Common myeloid progenitor, CD34-positive (primary cell): ENCODE measurements at regions of chr10 and their contacts with region 1.

Region 1: DNA sequence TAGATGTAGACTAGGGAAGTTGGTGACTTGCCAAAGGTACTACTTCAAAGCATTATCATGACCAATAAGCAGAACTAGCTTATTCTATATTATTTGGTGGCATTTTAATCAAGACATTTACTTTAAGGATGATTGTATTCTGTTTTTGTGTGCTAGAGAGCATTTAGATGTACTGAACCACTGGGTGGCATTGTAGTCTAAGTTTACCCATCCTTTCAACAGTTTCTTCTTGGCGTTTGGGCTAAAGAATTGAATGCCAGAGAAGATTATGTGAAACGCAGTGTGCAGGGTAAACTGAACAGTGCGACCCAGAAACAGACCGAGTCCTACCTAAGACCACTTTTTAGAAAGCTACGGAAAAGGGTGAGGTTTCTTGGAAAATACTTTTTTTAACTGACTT is 26.8 kb downstream of the PRPF18 start:
- DNase-seq: peak; percentile 36 to 60 (median 59)
- H3K4me3 ChIP-seq: no peak overlapping the region
- H3K27ac ChIP-seq: no peak overlapping the region
- H3K4me1 ChIP-seq: peaks cover 0 to 6% (median 1%) of the 10 kb centered on the region in 4 experiments
- H3K27me3 ChIP-seq: no peaks in the 10 kb centered on the region

Region 2: GRCh38 chr10:13593535-13593934 is 20.0 kb before region 1 on chr10:
- CTCF ChIA-PET with region 1: no interaction called
- POLR2A ChIA-PET with region 1: no interaction called
- DNase-seq: no peak
- H3K4me3 ChIP-seq: no peak overlapping the region
- H3K27ac ChIP-seq: no peak overlapping the region
- H3K4me1 ChIP-seq: no peaks in the 10 kb centered on the region
- H3K27me3 ChIP-seq: no peaks in the 10 kb centered on the region

Region 3: GRCh38 chr10:13724484-13724883 is 111.0 kb after region 1 on chr10:
- CTCF ChIA-PET with region 1: no interaction called
- POLR2A ChIA-PET with region 1: no interaction called
- DNase-seq: no peak
- H3K4me3 ChIP-seq: no peak overlapping the region
- H3K27ac ChIP-seq: no peak overlapping the region
- H3K4me1 ChIP-seq: peaks cover 0 to 4% (median 2%) of the 10 kb centered on the region in 4 experiments
- H3K27me3 ChIP-seq: no peaks in the 10 kb centered on the region

Region 4: GRCh38 chr10:13776861-13777311 is 163.4 kb after region 1 on chr10:
- CTCF ChIA-PET with region 1: interaction called, 18 read pairs
- POLR2A ChIA-PET with region 1: no interaction called
- DNase-seq: peak in 2 of 3 donors; percentile 46 to 65
- H3K4me3 ChIP-seq: no peak overlapping the region
- H3K27ac ChIP-seq: no peak overlapping the region
- H3K4me1 ChIP-seq: no peaks in the 10 kb centered on the region
- H3K27me3 ChIP-seq: no peaks in the 10 kb centered on the region

Region 5: GRCh38 chr10:13784067-13784466 is 170.5 kb after region 1 on chr10:
- CTCF ChIA-PET with region 1: interaction called, 10 read pairs
- POLR2A ChIA-PET with region 1: no interaction called
- DNase-seq: peak; percentile 35 to 76 (median 61)
- H3K4me3 ChIP-seq: no peak overlapping the region
- H3K27ac ChIP-seq: no peak overlapping the region
- H3K4me1 ChIP-seq: peaks cover 0 to 12% (median 12%) of the 10 kb centered on the region in 4 experiments
- H3K27me3 ChIP-seq: no peaks in the 10 kb centered on the region